HepG2 (cell line): ENCODE measurements at regions of chr16 and their contacts with region 1.

Region 1: DNA sequence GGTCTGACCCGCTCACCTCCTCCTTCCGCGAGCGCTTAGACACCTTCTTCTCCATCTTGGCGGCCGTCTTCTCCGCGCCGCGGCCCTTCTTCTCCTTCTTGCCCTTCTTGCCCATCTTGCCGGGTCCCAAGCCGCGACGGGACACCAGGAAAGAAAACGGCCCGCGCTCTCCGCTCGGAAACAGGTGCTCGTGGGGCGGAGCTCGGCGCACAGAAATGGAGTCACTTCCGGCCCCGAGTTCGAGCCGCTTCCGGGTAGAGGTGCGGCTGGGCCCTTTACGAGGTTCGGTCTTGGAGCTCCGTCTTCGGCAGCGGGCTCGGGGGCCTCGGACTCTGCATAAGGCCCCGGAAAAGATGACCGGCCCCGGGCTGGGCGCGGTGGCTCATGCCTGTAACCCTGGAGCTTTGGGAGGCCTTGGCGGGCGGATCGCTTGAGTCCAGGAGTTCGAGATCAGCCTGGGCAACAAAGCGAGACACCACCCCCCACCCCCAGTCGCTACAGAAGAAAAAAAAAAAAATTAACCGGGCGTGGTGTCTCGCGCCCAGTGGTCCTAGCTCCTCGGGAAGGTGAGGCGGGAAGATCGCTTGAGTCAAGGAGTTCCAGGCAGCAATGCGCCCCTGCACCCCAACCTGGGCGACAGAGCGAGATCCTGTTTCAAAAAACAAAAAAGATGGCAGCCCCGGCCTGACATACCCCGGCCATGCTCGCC is at the start of gene KLHDC4:
- DNase-seq: peak; percentile 78
- ATAC-seq: peak; percentile 90
- H3K4me3 ChIP-seq: peak within 1 kb of the TSS; percentile 87 to 97 (median 94)
- H3K27ac ChIP-seq: peak within 1 kb of the TSS; percentile 79
- H3K4me1 ChIP-seq: peaks cover 45% of the 10 kb centered on the region
- H3K27me3 ChIP-seq: no peaks in the 10 kb centered on the region; a peak in 1 of 5 replicates
- CTCF ChIP-seq: peak; percentile 17; the same call in 1 of the 2 replicates
- EP300 ChIP-seq: peak in 1 of 2 experiments; percentile 29; a peak in 2 of 4 replicates
- POLR2A ChIP-seq: peak; percentile 80 to 85
- RAD21 ChIP-seq: no peak
- total RNA-seq, gene KLHDC4: 26.7 and 31.8 TPM in 2 replicates

Region 2: DNA sequence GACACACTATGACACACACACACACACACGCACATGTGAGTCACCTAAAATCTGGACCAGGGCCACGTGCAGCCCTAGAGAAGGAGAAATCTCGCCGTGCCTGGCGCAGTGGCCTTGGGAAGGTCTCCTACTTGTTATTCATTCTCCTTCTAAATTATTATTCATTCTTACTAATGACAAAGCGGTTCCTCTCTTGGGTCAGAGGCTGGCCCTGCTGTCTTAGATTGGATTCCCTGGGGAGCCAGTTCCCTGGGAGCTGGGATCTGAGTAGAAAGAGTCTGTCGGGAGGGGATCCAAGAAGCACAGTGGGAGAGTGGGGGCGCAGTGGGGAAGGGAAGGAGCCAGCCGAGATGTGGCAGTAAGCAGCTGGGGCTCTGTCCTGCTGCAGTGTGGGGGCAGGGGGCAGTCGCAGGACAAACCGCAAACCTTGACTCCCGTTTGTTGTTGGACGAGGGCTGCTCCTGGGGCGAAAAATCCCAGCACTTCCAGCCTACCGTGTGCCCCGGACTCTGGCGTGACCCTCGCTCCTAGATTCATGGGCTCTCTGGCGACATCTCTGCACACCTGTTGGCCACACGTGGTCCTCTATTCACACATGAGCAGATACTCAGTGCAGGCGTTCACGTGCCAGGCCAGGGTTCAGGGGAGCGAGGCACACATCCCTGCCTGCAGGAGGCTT is 182.3 kb before region 1 on chr16:
- CTCF ChIA-PET with region 1: interaction called, 16 read pairs
- POLR2A ChIA-PET with region 1: no interaction called
- in situ Hi-C with region 1: loop called (anchors 5 kb)
- intact Hi-C with region 1: no loop called
- DNase-seq: no peak
- ATAC-seq: no peak
- H3K4me3 ChIP-seq: no peak overlapping the region
- H3K27ac ChIP-seq: no peak overlapping the region
- H3K4me1 ChIP-seq: peaks cover 20% of the 10 kb centered on the region
- H3K27me3 ChIP-seq: peaks cover 27 to 80% of the 10 kb centered on the region in 2 experiments
- CTCF ChIP-seq: no peak
- EP300 ChIP-seq: no peak
- POLR2A ChIP-seq: no peak
- RAD21 ChIP-seq: no peak

Region 3: DNA sequence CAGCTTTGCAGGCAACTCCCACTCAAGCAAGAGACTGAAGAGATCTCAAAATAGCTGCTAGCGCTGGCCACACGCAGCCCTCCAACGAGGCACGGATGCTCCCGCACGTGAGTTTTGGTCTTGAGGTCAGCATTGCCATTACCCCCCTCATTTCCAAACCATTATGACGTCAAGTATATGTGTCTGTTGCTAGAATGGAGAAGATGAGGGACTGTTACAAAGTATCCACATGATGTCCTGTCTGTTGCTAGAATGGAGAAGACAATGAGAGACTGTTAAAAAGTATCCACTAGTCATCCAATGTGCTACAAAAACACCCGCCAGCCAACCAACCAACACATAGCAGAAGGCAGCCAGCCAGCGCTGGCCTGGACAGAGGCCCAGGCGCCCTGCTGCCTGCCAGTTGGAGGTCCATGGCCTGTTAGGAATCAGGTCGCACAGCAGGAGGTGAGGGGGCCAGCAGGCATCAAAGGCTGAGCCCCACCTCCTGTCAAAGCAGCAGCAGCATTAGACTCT is 25.0 kb before region 1 on chr16:
- CTCF ChIA-PET with region 1: no interaction called
- POLR2A ChIA-PET with region 1: no interaction called
- in situ Hi-C with region 1: no loop called
- intact Hi-C with region 1: no loop called
- DNase-seq: no peak
- ATAC-seq: no peak
- H3K4me3 ChIP-seq: no peak overlapping the region
- H3K27ac ChIP-seq: no peak overlapping the region
- H3K4me1 ChIP-seq: no peaks in the 10 kb centered on the region
- H3K27me3 ChIP-seq: no peaks in the 10 kb centered on the region; a peak in 1 of 5 replicates
- CTCF ChIP-seq: no peak
- EP300 ChIP-seq: no peak
- POLR2A ChIP-seq: no peak
- RAD21 ChIP-seq: no peak

Region 4: GRCh38 chr16:87930456-87930855 is 164.5 kb after region 1 on chr16:
- CTCF ChIA-PET with region 1: no interaction called
- POLR2A ChIA-PET with region 1: no interaction called
- in situ Hi-C with region 1: no loop called
- intact Hi-C with region 1: loop called (anchors 5 kb)
- DNase-seq: peak; percentile 23
- ATAC-seq: peak; percentile 40
- H3K4me3 ChIP-seq: no peak overlapping the region
- H3K27ac ChIP-seq: no peak overlapping the region
- H3K4me1 ChIP-seq: peaks cover 46% of the 10 kb centered on the region
- H3K27me3 ChIP-seq: no peaks in the 10 kb centered on the region
- CTCF ChIP-seq: peak; percentile 56
- EP300 ChIP-seq: no peak
- POLR2A ChIP-seq: no peak
- RAD21 ChIP-seq: peak; percentile 36; the same call in 1 of the 2 replicates